Pancreas (tissue), 10 donors: ENCODE measurements at regions of chr1 and their contacts with region 1.

Region 1: DNA sequence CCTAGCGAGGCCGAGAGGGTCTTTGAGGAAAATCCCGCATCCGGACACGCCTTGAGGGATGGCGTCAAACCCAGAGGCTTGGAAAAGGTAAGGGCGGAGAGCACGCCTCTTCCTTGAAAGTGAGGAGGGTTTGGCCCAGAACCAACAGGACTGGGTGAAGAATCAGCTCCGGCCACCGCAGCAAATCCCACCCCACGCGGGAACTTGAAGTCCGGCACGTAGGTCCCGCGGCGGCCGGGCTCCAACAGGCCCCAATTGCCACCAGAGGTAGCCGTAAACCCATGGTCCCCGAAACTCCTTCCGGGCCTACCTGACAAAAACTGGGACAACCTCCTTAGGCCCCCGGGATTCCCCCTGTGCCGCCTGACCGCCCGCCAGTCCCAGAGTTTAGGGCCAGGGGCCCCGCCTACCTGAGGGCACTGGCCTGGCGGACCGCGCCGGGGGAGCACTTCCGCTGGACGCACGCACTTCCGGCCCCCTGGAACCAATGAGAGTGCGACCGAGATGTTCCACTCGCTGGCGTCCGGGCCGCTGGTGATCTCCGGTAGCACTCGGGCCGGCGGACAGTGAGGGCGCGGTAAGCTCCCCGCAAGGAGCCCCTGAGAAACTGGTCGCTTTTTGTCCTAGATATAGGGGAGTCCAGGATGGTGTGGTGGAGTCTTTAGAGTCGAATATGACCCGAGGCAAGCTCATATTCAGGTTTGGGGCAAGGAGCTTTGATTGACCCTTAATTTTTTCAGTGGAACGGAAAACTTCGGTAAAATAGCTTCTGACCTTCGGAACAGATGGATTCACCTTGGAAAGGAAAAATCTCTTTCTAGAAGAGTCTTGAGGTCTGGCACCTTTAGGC is at the starts of genes LZIC and NMNAT1:
- DNase-seq: peak; percentile 89 to 97 (median 92)
- ATAC-seq: peak; percentile 99 to 100 (median 100)
- H3K4me3 ChIP-seq: peak within 1 kb of the TSS; percentile 69 to 86 (median 80)
- H3K27ac ChIP-seq: peak within 1 kb of the TSS; percentile 56 to 86 (median 78)
- H3K4me1 ChIP-seq: peaks cover 0 to 7% (median 0%) of the 10 kb centered on the region in 3 donors
- H3K27me3 ChIP-seq: no peaks in the 10 kb centered on the region
- CTCF ChIP-seq: no peak
- total RNA-seq, gene LZIC: 8.4 to 19.6 (median 12.3) TPM
- total RNA-seq, gene NMNAT1: 3.0 to 9.3 (median 4.6) TPM

Region 2: GRCh38 chr1:10022656-10023055 is 79.5 kb after region 1 on chr1:
- intact Hi-C with region 1: loop called in 1 of 3 experiments (anchors 10 kb)
- DNase-seq: no peak
- ATAC-seq: no peak
- H3K4me3 ChIP-seq: no peak overlapping the region
- H3K27ac ChIP-seq: no peak overlapping the region
- H3K4me1 ChIP-seq: no peaks in the 10 kb centered on the region
- H3K27me3 ChIP-seq: no peaks in the 10 kb centered on the region
- CTCF ChIP-seq: no peak